HEK293 (cell line): ENCODE measurements at regions of chr17 and their contacts with region 1.

Region 1: GRCh38 chr17:76506408-76507349 is 5.5 kb upstream of the RHBDF2 start:
- H3K4me3 ChIP-seq: no peak overlapping the region
- H3K27ac ChIP-seq: no peak overlapping the region
- H3K4me1 ChIP-seq: peaks cover 3% of the 10 kb centered on the region; the same call in 1 of the 2 replicates
- CTCF ChIP-seq: peak; percentile 95

Region 2: GRCh38 chr17:76458580-76459490 is 47.8 kb before region 1 on chr17:
- CTCF ChIA-PET with region 1: interaction called, 187 read pairs
- POLR2A ChIA-PET with region 1: interaction called, 5 read pairs
- H3K4me3 ChIP-seq: no peak overlapping the region
- H3K27ac ChIP-seq: no peak overlapping the region
- H3K4me1 ChIP-seq: no peaks in the 10 kb centered on the region
- CTCF ChIP-seq: peak; percentile 79

Region 3: DNA sequence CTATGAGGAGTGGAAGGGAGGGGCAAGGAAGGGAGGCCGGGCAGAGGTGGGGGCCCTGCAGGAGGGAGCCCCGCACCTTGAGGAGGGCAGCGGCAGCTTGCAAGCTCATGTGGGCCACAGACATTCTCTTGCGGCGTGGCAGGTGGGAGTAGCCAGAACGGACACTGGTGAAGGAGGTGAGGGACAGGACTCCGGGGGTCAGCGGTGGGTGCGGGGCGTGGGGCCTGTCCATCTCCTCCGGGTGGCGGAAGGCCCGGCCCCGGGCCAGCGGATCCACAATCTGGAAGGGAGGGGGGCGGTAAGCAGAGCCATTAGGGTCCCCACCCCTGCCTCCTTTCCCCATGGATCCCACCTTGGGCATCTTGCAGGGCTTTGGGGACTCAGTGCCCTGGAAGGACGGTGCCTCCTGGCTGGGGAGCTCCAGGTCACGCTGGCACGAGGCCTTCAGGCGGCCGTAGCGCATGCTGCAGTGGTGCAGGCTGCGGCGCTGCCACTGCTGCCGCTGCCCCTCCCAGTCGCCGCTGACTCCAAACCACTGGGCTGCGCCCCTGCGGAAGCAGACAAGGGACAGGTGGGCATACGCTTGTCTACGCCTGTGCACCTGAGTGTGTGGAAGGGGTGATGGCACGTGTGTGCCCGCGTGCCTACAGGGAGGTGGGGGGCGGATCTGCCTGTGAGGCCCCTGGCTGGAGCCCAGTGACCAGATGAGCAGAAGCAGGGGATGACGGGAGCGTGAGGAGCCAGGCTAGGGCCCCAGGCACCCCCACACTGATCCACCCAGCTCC is 27.8 kb before region 1 on chr17:
- CTCF ChIA-PET with region 1: interaction called, 12 read pairs
- POLR2A ChIA-PET with region 1: interaction called, 3 read pairs
- H3K4me3 ChIP-seq: no peak overlapping the region
- H3K27ac ChIP-seq: no peak overlapping the region
- H3K4me1 ChIP-seq: no peaks in the 10 kb centered on the region
- CTCF ChIP-seq: no peak

Region 4: DNA sequence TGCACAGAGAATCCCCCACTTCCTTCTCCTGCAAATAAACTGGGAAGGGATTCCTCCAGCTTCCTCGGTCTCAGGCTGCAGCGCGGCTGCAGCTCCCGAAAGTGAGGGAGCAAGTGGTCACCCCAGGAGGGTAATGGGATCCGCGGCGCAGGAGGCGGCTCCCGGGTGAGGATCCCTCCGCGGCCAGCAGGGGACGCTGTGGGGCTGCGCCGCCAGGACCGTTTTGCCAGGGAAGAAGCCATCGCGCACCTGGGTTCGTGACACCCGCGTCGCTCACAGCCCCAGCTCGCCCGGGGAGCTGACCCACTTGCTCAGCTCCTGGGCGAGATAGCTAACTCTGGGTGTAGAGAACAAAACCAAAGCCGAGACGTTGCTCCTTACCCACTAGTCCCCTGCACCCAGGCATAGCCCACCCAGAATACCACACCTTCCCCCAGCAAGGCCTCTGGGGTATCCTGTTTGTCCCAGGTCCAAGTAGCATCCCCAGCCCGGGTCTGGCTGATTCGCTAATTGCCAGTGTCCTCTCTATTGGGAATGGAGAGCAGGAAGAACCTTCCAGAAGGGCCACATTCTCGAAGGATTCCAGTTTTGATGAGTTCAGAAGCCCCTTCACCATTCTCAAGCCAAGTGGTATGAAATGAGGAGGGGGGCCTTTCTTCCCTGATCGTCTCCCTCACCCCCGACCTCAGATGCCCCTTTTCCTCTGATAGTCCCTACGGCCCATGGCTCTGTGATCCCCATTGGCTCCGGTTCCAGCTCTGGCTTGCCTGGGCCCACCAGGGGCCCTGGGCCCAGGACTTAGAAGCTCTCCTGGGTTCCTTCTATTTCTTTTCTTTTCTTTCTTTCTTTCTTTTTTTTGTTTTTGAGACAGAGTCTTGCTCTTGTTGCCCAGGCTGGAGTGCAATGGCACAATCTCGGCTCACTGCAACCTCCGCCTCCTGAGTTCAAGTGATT is 16.7 kb after region 1 on chr17:
- CTCF ChIA-PET with region 1: interaction called, 27 read pairs
- POLR2A ChIA-PET with region 1: no interaction called
- H3K4me3 ChIP-seq: no peak overlapping the region
- H3K27ac ChIP-seq: no peak overlapping the region
- H3K4me1 ChIP-seq: peaks cover 8% of the 10 kb centered on the region
- CTCF ChIP-seq: peak; percentile 98

Region 5: DNA sequence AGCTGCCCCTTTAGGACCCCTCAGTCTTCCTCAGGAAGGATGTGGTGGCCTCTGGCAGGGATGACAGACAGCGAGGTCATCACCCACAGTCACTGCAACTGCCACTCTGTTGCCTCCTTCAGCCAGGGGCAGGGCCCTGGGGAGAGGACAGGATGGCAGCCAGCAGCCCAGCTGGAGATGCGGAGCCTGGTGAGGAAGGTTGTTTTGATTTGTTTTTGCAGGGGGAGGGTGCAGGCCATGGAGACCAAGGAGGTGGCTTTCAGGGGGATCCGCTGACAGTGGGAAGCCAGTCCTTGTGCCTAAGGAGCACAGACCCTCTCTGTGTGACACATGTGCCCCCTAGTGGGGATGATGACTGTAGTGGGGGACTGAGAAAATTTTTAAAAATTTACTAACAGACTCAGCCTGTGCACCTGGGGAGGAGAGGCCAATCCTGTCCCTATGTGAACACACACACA is 40.5 kb after region 1 on chr17:
- CTCF ChIA-PET with region 1: interaction called, 21 read pairs
- POLR2A ChIA-PET with region 1: no interaction called
- H3K4me3 ChIP-seq: no peak overlapping the region
- H3K27ac ChIP-seq: no peak overlapping the region
- H3K4me1 ChIP-seq: peaks cover 21% of the 10 kb centered on the region
- CTCF ChIP-seq: peak; percentile 86